ENCODE measurements at regions of chr19 and their contacts with region 1.

Region 1: GRCh38 chr19:6481541-6482342 is at the start of gene DENND1C:
- DNase-seq: peak; percentile 79
- ATAC-seq: peak; percentile 91
- H3K4me3 Mint-ChIP-seq: peak within 1 kb of the TSS; percentile 100
- H3K27ac Mint-ChIP-seq: peak within 1 kb of the TSS; percentile 99
- H3K4me1 Mint-ChIP-seq: peaks cover 24% of the 10 kb centered on the region
- H3K27me3 Mint-ChIP-seq: no peaks in the 10 kb centered on the region
- total RNA-seq, gene DENND1C: 126 to 130 TPM

Region 2: DNA sequence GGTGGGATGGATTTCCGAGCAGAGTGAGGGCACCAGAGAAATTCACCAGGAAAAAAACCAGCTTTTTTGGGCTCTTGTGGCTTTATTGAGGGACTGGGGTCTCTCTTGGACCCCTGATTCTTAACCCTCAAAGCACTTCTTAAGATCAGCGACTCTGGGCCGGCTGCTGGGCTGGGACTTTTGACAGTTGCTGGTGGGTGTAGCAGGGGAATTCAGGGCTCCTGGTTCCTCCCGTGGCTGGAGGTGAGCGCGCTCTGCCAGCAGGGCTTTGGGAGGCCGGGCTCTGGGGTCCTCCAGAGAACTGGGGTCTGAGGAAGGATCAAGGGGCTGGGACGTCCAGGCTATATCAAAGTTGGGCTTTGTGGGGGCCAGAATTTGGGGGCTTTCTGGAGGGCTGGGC is 14.4 kb before region 1 on chr19:
- POLR2A ChIA-PET with region 1: interaction called, 10 read pairs
- DNase-seq: no peak
- ATAC-seq: no peak
- H3K4me3 Mint-ChIP-seq: no peak overlapping the region
- H3K27ac Mint-ChIP-seq: no peak overlapping the region
- H3K4me1 Mint-ChIP-seq: no peaks in the 10 kb centered on the region
- H3K27me3 Mint-ChIP-seq: no peaks in the 10 kb centered on the region

Region 3: DNA sequence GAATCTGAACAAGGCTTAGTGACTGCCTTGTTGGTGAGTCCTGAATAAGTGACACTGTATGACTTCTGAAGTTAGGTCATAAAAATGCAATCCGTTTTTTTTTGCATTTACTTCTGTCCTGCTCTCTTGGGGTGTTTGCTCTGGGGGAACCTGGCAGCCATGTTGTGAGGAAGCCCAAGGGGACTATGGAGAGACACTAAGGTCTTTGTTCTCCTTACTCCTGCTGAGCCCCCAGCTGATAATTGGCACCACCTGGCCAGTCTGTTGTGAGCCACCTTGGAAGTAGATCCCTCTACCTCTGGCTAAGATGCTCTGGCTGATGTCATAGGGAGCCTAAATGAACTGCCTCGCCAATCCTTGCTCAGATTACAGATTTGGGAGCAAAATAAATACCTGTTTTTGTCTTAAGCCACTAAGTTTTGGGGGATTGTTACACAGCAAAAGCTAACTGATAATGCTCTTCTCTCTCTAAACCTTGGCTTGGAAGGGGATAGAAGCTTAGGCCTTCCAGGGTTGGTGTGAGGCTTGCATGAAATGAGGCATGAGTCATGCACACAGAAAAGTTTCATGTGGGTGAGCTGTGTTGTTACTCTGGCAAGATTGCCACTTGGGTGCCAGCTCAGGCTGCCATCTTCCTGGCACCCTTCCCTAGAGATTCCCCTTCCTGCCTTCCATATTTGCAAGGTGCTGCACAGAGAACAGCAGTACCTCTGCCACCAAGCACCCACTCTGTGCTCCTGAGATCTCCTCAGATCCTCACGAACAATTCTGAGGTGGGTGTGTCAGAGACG is 10.3 kb after region 1 on chr19:
- POLR2A ChIA-PET with region 1: interaction called, 11 read pairs
- DNase-seq: no peak
- ATAC-seq: no peak
- H3K4me3 Mint-ChIP-seq: no peak overlapping the region
- H3K27ac Mint-ChIP-seq: no peak overlapping the region
- H3K4me1 Mint-ChIP-seq: peaks cover 11% of the 10 kb centered on the region
- H3K27me3 Mint-ChIP-seq: no peaks in the 10 kb centered on the region

Region 4: GRCh38 chr19:6501740-6502648 is 20.3 kb after region 1 on chr19 and contains the start of gene TUBB4A:
- POLR2A ChIA-PET with region 1: interaction called, 23 read pairs
- DNase-seq: peak; percentile 78
- ATAC-seq: peak; percentile 61
- H3K4me3 Mint-ChIP-seq: peak within 1 kb of the TSS; percentile 86
- H3K27ac Mint-ChIP-seq: peak within 1 kb of the TSS; percentile 74
- H3K4me1 Mint-ChIP-seq: peaks cover 26% of the 10 kb centered on the region
- H3K27me3 Mint-ChIP-seq: peaks cover 14% of the 10 kb centered on the region
- total RNA-seq, gene TUBB4A: 8.7 to 11.6 TPM